Activated naive CD4-positive, alpha-beta T cell treated with anti-CD3 and anti-CD28 coated beads for 36 hours (primary cell): ENCODE measurements at regions of chr2 and their contacts with region 1.

Region 1: DNA sequence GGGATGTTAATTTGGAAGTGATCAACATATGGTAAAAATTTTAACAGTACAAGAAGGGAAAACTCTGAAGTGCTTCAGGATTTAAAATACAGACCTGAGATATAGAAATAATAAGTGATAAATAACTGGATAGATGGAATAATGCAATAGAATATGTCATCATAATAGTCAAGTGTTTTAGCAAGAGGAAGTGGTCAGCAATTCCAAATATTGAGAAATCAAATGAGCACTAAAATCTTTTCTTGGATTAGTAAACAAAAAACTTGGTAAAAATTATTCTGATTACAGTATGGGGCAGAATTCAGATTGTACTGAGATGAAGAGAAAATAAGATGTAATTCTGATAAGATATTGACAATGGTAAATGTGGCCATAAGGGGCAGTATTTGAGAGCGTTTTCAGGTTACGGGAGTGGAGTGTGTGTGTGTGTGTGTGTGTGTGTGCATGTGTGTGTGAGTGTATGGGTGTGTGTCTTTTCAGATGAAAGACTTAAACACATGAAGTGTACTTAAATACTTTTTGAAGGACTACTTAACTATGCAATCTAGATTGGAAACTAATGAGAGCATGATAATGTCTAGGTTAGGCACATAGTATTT is 217.9 kb upstream of the ITGA4 start:
- DNase-seq: peak; percentile 24
- H3K4me3 Mint-ChIP-seq: no peak overlapping the region
- H3K27ac Mint-ChIP-seq: no peak overlapping the region
- H3K4me1 Mint-ChIP-seq: peaks cover 36% of the 10 kb centered on the region
- H3K27me3 Mint-ChIP-seq: no peaks in the 10 kb centered on the region

Region 2: DNA sequence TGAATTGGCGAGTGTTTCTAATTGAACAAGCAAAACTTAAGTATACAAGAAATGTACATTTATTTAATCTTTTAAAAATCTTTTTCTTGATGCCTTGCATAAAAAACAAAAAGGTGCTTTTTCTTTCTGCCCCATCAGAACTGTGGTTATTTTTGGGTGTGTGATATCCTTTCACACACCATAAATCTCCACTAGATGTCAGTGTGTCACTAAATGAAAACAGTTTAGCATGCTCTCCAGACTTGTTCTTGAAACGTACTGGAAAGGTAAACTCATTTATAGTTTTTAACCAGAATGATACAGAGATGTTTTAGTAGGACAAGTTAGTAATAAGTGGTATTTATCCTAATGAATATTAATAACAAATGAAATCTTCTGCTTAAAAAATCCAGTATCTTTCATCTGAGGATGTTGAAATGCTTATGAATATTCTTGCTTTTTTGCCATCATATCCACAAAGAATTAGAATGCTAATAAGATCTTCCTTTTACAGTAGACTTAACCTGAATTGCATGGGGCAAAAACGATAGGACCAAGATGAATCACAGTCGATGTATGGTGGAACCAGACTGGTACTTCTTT is 162.1 kb before region 1 on chr2:
- CTCF ChIA-PET with region 1: no interaction called
- intact Hi-C with region 1: no loop called
- DNase-seq: peak; percentile 8
- H3K4me3 Mint-ChIP-seq: no peak overlapping the region
- H3K27ac Mint-ChIP-seq: no peak overlapping the region
- H3K4me1 Mint-ChIP-seq: peaks cover 6% of the 10 kb centered on the region
- H3K27me3 Mint-ChIP-seq: no peaks in the 10 kb centered on the region

Region 3: GRCh38 chr2:181281206-181281832 is 42.0 kb after region 1 on chr2:
- CTCF ChIA-PET with region 1: interaction called, 4 read pairs
- intact Hi-C with region 1: loop called (anchors 2 kb)
- DNase-seq: no peak
- H3K4me3 Mint-ChIP-seq: no peak overlapping the region
- H3K27ac Mint-ChIP-seq: peak overlapping the region; percentile 60
- H3K4me1 Mint-ChIP-seq: peaks cover 37% of the 10 kb centered on the region
- H3K27me3 Mint-ChIP-seq: no peaks in the 10 kb centered on the region

Region 4: GRCh38 chr2:181614874-181615638 is 375.8 kb after region 1 on chr2:
- CTCF ChIA-PET with region 1: no interaction called
- intact Hi-C with region 1: no loop called
- DNase-seq: no peak
- H3K4me3 Mint-ChIP-seq: no peak overlapping the region
- H3K27ac Mint-ChIP-seq: no peak overlapping the region
- H3K4me1 Mint-ChIP-seq: no peaks in the 10 kb centered on the region
- H3K27me3 Mint-ChIP-seq: no peaks in the 10 kb centered on the region